Activated naive CD4-positive, alpha-beta T cell treated with anti-CD3 and anti-CD28 coated beads for 36 hours (primary cell): ENCODE measurements at regions of chr2 and their contacts with region 1.

Region 1: DNA sequence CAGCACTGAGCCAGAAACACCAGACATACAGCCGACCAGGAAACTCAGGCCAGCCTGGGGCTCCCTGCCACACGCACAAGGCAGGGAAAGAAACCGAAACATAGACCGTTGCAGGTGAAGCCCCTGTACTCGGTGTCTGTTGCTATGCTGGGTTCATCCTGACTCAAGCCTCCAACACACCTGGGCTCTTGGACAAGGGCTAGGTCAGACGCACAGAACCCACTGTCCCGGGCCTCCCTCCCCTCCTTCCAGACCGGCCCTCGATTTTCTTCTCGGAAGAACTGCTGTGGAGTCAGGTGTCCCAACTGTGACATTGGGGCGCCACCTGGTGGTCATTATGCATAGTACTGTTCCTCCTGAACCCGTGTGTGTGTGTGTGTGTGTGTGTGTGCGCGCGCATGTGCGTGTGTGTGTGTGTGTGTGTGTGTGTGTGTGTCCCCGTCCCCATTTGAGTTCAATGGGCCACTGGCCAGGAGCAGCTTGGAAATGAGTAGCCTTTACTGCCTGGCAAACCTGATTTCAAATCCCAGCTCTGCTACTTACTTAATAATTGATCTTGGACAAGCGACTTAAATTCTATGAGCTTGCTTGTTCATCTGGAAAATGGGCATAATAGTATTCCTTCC is 55.4 kb upstream of the GLI2 start:
- DNase-seq: peak; percentile 87
- H3K4me3 Mint-ChIP-seq: no peak overlapping the region
- H3K27ac Mint-ChIP-seq: no peak overlapping the region
- H3K4me1 Mint-ChIP-seq: peaks cover 2% of the 10 kb centered on the region
- H3K27me3 Mint-ChIP-seq: peaks cover 15% of the 10 kb centered on the region

Region 2: GRCh38 chr2:119702918-119703401 is 977.3 kb before region 1 on chr2:
- CTCF ChIA-PET with region 1: no interaction called
- intact Hi-C with region 1: loop called (anchors 2 kb)
- DNase-seq: peak; percentile 74
- H3K4me3 Mint-ChIP-seq: no peak overlapping the region
- H3K27ac Mint-ChIP-seq: no peak overlapping the region
- H3K4me1 Mint-ChIP-seq: peaks cover 16% of the 10 kb centered on the region
- H3K27me3 Mint-ChIP-seq: no peaks in the 10 kb centered on the region

Region 3: GRCh38 chr2:120109186-120110061 is 570.8 kb before region 1 on chr2:
- CTCF ChIA-PET with region 1: interaction called, 4 read pairs
- intact Hi-C with region 1: loop called (anchors 1 kb)
- DNase-seq: no peak
- H3K4me3 Mint-ChIP-seq: no peak overlapping the region
- H3K27ac Mint-ChIP-seq: peak overlapping the region; percentile 78
- H3K4me1 Mint-ChIP-seq: peaks cover 27% of the 10 kb centered on the region
- H3K27me3 Mint-ChIP-seq: no peaks in the 10 kb centered on the region

Region 4: GRCh38 chr2:120343433-120344105 is 336.7 kb before region 1 on chr2:
- CTCF ChIA-PET with region 1: interaction called, 16 read pairs
- intact Hi-C with region 1: loop called (anchors 1 kb)
- DNase-seq: peak; percentile 79
- H3K4me3 Mint-ChIP-seq: peak overlapping the region; percentile 32
- H3K27ac Mint-ChIP-seq: no peak overlapping the region
- H3K4me1 Mint-ChIP-seq: peaks cover 13% of the 10 kb centered on the region
- H3K27me3 Mint-ChIP-seq: peaks cover 50% of the 10 kb centered on the region

Region 5: DNA sequence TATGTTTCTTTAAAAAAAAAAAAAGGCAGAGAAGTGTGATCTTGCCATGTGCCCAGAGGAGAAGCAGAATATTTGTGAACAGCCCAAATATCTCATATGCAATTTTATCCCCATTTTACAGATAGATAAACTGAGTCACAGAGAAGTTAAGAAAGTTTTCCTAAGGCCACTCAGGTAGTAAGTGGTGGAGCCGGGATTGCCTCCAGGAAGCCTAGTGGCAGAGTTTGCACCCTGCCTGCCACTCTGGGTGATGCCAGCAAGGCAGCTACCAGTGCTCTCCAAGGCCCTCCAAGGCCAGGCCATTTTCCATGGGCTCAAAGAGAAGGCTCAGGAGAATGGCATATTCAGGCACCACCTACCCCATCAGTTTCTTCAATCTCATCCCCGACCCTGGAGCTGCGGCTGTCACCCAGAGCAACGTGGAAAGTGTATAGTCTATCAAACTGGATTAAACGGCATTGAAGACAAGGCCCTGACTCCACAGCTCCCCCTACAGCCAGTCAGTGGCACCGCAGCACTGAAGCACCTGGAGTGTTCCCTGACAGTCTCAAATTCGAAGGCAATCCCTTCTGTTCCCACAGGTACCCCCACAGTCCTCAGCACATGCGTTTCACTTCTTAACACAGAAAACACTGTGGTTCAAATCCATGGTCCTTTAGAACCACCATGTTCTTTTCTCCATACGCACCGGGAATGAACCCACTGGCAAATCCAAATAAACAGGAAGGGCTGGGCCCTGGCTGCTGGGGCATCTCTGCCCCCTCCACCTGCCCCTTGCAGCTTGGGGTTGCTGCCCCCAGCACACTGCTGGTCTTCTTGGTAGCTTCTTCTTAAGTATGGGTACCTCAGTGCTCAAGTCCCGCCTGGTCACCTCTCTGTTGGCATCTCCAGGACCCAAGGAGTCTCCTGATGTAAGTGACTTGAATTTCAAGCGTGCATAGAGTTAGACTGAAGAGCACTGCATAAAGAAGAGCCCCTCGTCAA is 159.0 kb before region 1 on chr2:
- CTCF ChIA-PET with region 1: no interaction called
- intact Hi-C with region 1: loop called (anchors 5 kb)
- DNase-seq: peak; percentile 61
- H3K4me3 Mint-ChIP-seq: no peak overlapping the region
- H3K27ac Mint-ChIP-seq: no peak overlapping the region
- H3K4me1 Mint-ChIP-seq: no peaks in the 10 kb centered on the region
- H3K27me3 Mint-ChIP-seq: peaks cover 38% of the 10 kb centered on the region

Region 6: DNA sequence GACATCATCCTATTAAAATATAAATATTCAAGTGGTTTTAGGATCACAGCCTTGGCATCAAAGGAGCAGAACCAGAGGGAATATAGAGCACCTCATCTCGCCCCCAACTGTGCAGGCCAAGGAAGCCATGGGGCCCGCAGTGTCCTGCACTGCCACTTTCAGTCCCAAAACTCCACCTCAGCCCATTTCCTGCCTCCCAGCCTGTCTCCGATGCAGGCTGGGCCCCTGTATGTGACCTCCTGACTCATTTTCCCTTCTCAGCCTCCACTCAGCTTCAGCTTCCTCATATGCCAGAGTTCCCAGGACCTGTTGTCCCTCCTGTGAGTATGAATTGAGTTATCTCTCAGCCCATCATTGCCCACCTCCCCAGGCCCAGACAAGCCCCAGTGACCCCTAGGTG is 17.5 kb before region 1 on chr2:
- CTCF ChIA-PET with region 1: no interaction called
- intact Hi-C with region 1: no loop called
- DNase-seq: no peak
- H3K4me3 Mint-ChIP-seq: no peak overlapping the region
- H3K27ac Mint-ChIP-seq: no peak overlapping the region
- H3K4me1 Mint-ChIP-seq: no peaks in the 10 kb centered on the region
- H3K27me3 Mint-ChIP-seq: peaks cover 7% of the 10 kb centered on the region